ENCODE measurements at regions of chr7 and their contacts with region 1.

Region 1: DNA sequence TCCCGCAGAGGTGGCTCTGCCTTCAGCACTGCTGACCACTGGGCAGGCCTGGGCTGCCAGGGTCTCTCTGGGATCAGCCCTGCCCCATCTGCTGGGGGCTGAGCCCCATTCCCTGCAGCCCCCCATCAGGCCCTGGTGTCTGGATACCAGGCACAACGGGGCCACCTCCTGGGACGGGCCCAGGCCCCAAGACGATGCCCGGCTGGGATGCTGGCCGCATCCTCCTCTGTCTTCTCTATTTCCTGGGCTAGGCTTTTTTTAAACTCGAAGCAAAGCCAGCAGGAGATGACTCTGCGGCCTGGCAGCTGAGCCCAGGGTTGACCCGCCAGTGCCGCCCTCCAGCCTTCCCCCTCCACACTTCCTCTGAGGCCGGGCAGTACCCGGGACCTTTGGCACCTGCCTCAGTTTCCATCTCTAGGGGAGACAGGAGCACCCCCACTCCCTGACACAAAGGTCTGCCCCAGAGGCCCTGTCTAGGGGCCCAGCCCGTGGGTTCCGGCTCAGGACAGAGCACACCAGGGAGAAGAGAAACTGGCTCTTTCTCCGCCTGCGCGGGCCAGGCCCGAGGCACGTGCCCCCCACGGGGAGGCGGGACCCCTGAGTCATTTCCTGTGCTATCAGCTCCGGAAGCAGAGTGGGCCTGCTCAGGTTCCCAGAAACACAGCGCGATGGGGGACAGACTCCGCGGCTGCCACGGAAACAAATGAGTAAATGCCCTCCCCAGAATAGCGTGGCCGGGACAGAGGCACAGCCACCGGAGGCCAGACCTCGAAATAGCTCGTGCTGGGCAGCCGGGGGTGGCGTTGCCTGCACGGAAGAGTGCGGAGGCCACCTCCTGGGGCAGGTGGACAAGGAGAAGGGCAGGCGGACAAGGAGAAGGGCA is 84.6 kb upstream of the PDGFA start:
- DNase-seq: peak; percentile 74 to 91 (median 87)
- ATAC-seq: peak; percentile 89
- H3K4me3 ChIP-seq: peak overlapping the region; percentile 26
- H3K4me3 Mint-ChIP-seq: peak overlapping the region; percentile 77 to 98 (median 88)
- H3K27ac ChIP-seq: peak overlapping the region; percentile 86
- H3K27ac Mint-ChIP-seq: peak overlapping the region; percentile 93 to 100 (median 99)
- H3K4me1 ChIP-seq: peaks cover 48 to 56% of the 10 kb centered on the region in 2 donors
- H3K4me1 Mint-ChIP-seq: peaks cover 37 to 72% (median 49%) of the 10 kb centered on the region in 7 donors
- H3K27me3 ChIP-seq: no peaks in the 10 kb centered on the region
- H3K27me3 Mint-ChIP-seq: no peaks in the 10 kb centered on the region

Region 2: DNA sequence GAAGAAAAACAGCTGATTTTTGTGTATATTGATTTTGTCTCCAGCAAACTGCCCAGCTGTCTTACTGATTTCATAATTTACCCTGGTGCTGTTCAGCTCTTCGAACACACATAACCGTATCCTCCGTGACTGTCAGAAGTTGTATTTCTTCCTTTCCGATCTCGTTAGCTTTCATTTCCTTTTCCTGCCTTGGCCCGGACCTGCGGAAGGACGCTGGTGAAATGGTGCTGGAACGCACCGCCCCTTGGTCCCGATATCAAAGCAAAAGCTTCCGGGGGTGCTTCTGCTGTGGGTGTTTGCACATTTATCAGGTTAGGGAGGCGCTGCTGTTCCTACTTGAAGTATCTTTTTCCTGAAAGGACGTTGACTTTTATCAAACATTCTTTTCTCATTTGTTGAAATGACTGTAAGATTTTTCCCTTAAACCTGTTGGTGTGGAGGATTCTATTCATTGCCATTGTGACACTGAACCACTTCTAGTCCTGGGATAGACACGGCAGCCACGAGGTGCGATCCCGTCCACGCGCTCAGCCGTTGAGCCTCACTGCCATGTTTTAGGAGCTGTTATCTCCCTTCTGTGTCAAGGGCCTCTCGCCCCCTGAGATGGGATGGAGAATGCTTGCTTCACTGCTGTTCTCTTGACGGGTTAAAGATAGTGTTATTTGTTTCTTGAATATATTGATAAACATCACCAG is 241.7 kb before region 1 on chr7:
- CTCF ChIA-PET with region 1: no interaction called
- POLR2A ChIA-PET with region 1: interaction called, 5 read pairs
- intact Hi-C with region 1: loop called in 1 of 2 experiments (anchors 5 kb)
- DNase-seq: peak in 7 of 9 donors; percentile 57 to 70 (median 61)
- ATAC-seq: peak; percentile 68
- H3K4me3 ChIP-seq: peak overlapping the region; percentile 38
- H3K4me3 Mint-ChIP-seq: peak overlapping the region; percentile 71 to 85 (median 76)
- H3K27ac ChIP-seq: peak overlapping the region; percentile 68
- H3K27ac Mint-ChIP-seq: peak overlapping the region; percentile 86 to 98 (median 94)
- H3K4me1 ChIP-seq: peaks cover 29 to 72% of the 10 kb centered on the region in 2 donors
- H3K4me1 Mint-ChIP-seq: peaks cover 52 to 89% (median 73%) of the 10 kb centered on the region in 7 donors
- H3K27me3 ChIP-seq: no peaks in the 10 kb centered on the region
- H3K27me3 Mint-ChIP-seq: peaks cover 0 to 5% (median 0%) of the 10 kb centered on the region in 5 donors

Region 3: DNA sequence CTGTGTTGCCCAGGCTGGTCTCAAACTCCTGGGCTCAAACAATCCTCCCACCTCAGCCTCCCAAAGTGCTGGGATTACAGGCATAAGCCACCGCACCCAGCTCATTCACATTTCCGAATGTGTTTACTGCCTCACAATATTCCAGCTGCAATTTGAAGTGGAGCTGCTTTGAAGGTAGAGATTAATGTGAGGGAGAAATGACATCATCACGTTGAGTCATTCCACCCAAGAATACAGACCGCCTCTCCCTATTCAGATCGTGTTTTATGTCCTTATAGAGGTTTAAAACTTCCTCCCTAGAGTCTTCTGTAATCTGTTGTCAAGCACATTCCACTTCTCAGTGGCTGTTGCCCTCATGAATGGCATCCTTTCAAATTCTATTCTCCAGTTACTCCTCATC is 15.8 kb after region 1 on chr7:
- CTCF ChIA-PET with region 1: no interaction called
- POLR2A ChIA-PET with region 1: interaction called, 63 read pairs
- intact Hi-C with region 1: loop called (anchors 1 kb)
- DNase-seq: no peak
- ATAC-seq: no peak
- H3K4me3 ChIP-seq: no peak overlapping the region
- H3K4me3 Mint-ChIP-seq: peak overlapping the region in 7 of 10 donors; percentile 33 to 93 (median 79)
- H3K27ac ChIP-seq: peak overlapping the region; percentile 91
- H3K27ac Mint-ChIP-seq: peak overlapping the region; percentile 96 to 100 (median 99)
- H3K4me1 ChIP-seq: peaks cover 39 to 42% of the 10 kb centered on the region in 2 donors
- H3K4me1 Mint-ChIP-seq: peaks cover 32 to 77% (median 54%) of the 10 kb centered on the region in 7 donors
- H3K27me3 ChIP-seq: no peaks in the 10 kb centered on the region
- H3K27me3 Mint-ChIP-seq: no peaks in the 10 kb centered on the region

Region 4: DNA sequence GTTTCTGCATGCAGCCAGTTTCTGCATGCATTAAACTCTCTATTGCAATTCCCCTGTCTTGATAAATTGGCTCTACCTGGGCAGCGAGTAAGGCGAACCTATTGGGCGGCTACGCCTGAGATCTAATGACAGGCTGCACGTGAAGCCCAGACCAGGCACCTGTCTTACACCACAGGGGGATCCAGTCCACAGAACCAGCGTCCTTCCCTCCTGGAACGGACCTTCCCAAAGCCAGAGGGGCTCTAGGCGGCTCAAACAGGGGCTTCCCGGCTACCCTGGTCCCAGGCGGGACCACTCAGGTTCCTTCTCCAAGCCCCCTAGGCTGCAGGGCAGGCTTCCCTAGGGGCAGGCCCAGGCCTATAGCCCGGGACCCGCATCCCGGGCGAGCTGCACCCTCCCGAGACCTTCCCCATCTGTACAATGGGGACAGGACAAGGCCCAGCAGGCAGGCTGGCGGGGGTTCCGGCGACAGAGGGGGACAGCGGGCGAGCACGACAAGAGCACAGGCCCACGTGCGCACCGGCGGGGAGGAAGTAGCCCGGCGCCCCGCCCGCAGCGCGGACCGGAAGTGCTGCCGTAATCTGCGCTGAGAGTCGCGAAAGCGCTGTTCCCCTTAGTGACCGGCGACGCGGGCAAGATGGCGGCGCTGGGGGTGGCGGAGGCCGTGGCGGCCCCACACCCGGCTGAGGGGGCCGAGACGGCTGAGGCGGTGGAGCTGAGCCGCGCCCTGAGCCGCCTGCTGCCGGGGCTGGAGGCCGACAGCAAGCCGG is 122.0 kb after region 1 on chr7 and contains the start of gene DNAAF5:
- CTCF ChIA-PET with region 1: no interaction called
- POLR2A ChIA-PET with region 1: interaction called, 3 read pairs
- intact Hi-C with region 1: loop called (anchors 1 kb)
- DNase-seq: peak; percentile 73 to 90 (median 84)
- ATAC-seq: peak; percentile 97
- H3K4me3 ChIP-seq: peak within 1 kb of the TSS; percentile 81
- H3K4me3 Mint-ChIP-seq: peak within 1 kb of the TSS; percentile 72 to 88 (median 84)
- H3K27ac ChIP-seq: peak within 1 kb of the TSS; percentile 73
- H3K27ac Mint-ChIP-seq: peak within 1 kb of the TSS in 8 of 9 donors; percentile 57 to 83 (median 71)
- H3K4me1 ChIP-seq: peaks cover 14 to 15% of the 10 kb centered on the region in 2 donors
- H3K4me1 Mint-ChIP-seq: peaks cover 20 to 37% (median 21%) of the 10 kb centered on the region in 7 donors
- H3K27me3 ChIP-seq: no peaks in the 10 kb centered on the region
- H3K27me3 Mint-ChIP-seq: no peaks in the 10 kb centered on the region
- total RNA-seq, gene DNAAF5: 12.5 to 25.7 (median 14.6) TPM